Sciatic nerve (tissue), 2 donors: ENCODE measurements at regions of chr1 and their contacts with region 1.

Region 1: GRCh38 chr1:235253219-235253962 is 74.6 kb downstream of the ARID4B start:
- DNase-seq: no peak
- ATAC-seq: peak; percentile 95

Region 2: GRCh38 chr1:235415008-235415904 is 161.9 kb after region 1 on chr1:
- intact Hi-C with region 1: loop called (anchors 5 kb)
- DNase-seq: peak; percentile 65
- ATAC-seq: peak; percentile 83

Region 3: DNA sequence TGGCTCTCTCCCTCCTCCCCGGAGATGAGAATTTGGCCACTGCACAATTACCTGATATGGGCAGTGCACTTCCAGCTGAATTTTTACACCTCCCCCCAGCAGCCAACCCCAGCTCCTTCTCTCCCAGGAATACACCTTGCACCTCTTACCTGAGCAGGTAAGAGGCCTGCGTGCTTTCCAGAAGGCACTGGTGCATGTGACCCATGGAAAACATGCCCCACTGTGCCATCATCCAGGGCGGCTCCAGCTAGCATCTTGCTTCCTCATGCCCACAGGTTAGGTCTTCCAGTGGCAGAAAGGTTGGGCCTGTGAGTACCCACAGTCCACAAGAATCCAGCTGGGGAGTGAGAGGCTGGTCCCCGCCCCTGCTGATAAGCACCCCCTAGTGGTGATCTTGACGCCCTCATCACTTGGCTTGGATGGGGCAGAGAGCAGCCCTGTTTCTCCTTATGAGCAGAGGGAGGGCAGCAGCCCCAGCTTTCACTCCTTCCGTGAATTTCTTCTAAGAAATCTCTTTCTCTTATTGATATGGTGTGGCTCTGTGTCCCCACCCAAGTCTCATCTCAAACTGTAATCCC is 1198.5 kb after region 1 on chr1:
- intact Hi-C with region 1: loop called (anchors 5 kb)
- DNase-seq: no peak
- ATAC-seq: no peak